T-cell (primary cell): ENCODE measurements at regions of chr17 and their contacts with region 1.

Region 1: DNA sequence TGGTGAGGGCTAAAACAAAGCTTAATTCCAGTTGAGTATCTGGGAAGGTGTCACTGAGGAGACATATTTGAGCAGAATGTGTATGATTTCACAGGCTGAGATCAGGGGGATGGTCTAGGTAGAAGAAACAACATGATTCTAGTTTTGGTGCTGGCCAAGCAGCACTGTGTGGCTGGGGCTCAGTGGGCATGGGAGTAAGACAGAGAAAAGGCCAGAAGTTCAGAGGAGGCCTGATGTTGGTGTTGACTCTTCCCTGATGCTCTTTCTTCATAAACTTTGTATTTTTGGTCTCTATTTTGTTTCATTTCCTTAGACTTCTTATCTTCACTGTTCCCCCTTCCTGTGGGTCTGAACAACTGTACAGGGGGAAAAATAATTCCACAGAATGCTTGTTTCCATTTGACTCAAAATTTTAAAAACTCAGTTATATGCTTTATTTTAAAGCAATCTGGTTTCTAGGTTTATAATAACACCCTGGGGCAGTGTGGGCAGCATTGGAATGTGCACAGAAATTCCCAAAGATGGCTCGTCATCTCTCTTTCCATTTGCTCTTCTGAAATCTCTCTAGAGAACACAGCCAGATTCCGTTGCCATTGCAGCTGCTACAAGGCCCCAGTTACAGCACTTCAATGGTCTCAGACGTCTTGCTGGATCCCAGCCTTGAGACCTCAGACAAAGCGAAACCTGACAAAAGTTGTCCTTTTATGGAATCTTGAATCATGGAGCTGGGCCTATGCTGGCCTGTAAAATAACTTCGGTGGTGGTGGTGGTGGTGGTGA is 68.3 kb downstream of the SNX11 start:
- DNase-seq: no peak
- ATAC-seq: no peak
- H3K4me3 ChIP-seq: no peak overlapping the region
- H3K4me3 Mint-ChIP-seq: no peak overlapping the region
- H3K27ac ChIP-seq: no peak overlapping the region
- H3K27ac Mint-ChIP-seq: peak overlapping the region in 1 of 2 donors; percentile 61
- H3K4me1 ChIP-seq: peaks cover 5% of the 10 kb centered on the region in 2 experiments
- H3K4me1 Mint-ChIP-seq: peaks cover 26 to 48% (median 30%) of the 10 kb centered on the region in 3 donors
- H3K27me3 ChIP-seq: no peaks in the 10 kb centered on the region
- H3K27me3 Mint-ChIP-seq: no peaks in the 10 kb centered on the region

Region 2: DNA sequence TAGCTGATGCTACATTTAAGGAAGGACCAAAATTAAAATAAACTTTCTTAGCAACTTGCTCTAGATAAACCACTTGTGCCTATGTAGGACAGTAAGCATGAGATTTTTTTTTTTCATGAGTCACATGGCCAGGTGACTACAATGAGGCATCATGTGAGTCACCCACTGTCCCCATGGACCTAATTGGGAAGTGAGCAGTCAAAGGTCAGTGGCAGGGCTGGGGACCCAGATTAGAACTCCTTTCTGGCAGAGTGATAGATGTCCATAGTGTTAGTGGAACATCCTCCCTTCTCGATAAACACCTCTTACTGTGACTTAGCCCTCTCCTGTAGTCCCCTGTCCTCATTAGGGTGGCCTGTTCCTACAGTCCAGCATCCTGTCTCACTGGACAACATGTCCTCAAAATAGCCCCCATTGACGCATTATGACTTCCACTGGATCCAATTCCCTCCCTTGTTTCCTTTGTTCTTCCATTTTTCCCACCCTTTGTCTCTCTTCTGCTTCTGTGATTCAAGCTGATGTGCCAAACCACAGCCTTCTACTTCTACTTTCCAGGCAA is 909.8 kb before region 1 on chr17:
- CTCF ChIA-PET with region 1: interaction called in 1 of 2 experiments, 11 read pairs
- POLR2A ChIA-PET with region 1: no interaction called
- DNase-seq: no peak
- ATAC-seq: no peak
- H3K4me3 ChIP-seq: no peak overlapping the region
- H3K4me3 Mint-ChIP-seq: no peak overlapping the region
- H3K27ac ChIP-seq: no peak overlapping the region
- H3K27ac Mint-ChIP-seq: no peak overlapping the region
- H3K4me1 ChIP-seq: no peaks in the 10 kb centered on the region
- H3K4me1 Mint-ChIP-seq: no peaks in the 10 kb centered on the region
- H3K27me3 ChIP-seq: peaks cover 2 to 10% of the 10 kb centered on the region in 2 experiments
- H3K27me3 Mint-ChIP-seq: peaks cover 5 to 28% of the 10 kb centered on the region in 2 donors

Region 3: GRCh38 chr17:48107168-48108132 is 68.4 kb before region 1 on chr17 and contains the start of gene SNX11:
- CTCF ChIA-PET with region 1: no interaction called
- POLR2A ChIA-PET with region 1: no interaction called
- DNase-seq: peak; percentile 85 to 97 (median 93)
- ATAC-seq: peak; percentile 92 to 94 (median 93)
- H3K4me3 ChIP-seq: peak within 1 kb of the TSS; percentile 85 to 94
- H3K4me3 Mint-ChIP-seq: peak within 1 kb of the TSS; percentile 93 to 98 (median 96)
- H3K27ac ChIP-seq: peak within 1 kb of the TSS; percentile 84
- H3K27ac Mint-ChIP-seq: peak within 1 kb of the TSS; percentile 87 to 97
- H3K4me1 ChIP-seq: peaks cover 20 to 53% of the 10 kb centered on the region in 2 experiments
- H3K4me1 Mint-ChIP-seq: peaks cover 54 to 67% (median 64%) of the 10 kb centered on the region in 3 donors
- H3K27me3 ChIP-seq: no peaks in the 10 kb centered on the region
- H3K27me3 Mint-ChIP-seq: no peaks in the 10 kb centered on the region
- total RNA-seq, gene SNX11: 10.6 to 20.4 (median 19.5) TPM

Region 4: GRCh38 chr17:48244121-48244711 is 68.3 kb after region 1 on chr17:
- CTCF ChIA-PET with region 1: no interaction called
- POLR2A ChIA-PET with region 1: no interaction called
- DNase-seq: peak in 1 of 35 experiments; percentile 20
- ATAC-seq: peak; percentile 45 to 63 (median 56)
- H3K4me3 ChIP-seq: no peak overlapping the region
- H3K4me3 Mint-ChIP-seq: no peak overlapping the region
- H3K27ac ChIP-seq: no peak overlapping the region
- H3K27ac Mint-ChIP-seq: peak overlapping the region in 1 of 2 donors; percentile 37
- H3K4me1 ChIP-seq: peaks cover 19% of the 10 kb centered on the region in 2 experiments
- H3K4me1 Mint-ChIP-seq: peaks cover 72 to 76% (median 75%) of the 10 kb centered on the region in 3 donors
- H3K27me3 ChIP-seq: no peaks in the 10 kb centered on the region
- H3K27me3 Mint-ChIP-seq: no peaks in the 10 kb centered on the region